OCI-LY7 (cell line): ENCODE measurements at regions of chr17 and their contacts with region 1.

Region 1: GRCh38 chr17:1573916-1574696 is 11.5 kb upstream of the PITPNA start:
- DNase-seq: peak; percentile 84
- H3K4me3 ChIP-seq: no peak overlapping the region
- H3K27ac ChIP-seq: no peak overlapping the region
- H3K4me1 ChIP-seq: peaks cover 13% of the 10 kb centered on the region
- CTCF ChIP-seq: peak; percentile 91

Region 2: DNA sequence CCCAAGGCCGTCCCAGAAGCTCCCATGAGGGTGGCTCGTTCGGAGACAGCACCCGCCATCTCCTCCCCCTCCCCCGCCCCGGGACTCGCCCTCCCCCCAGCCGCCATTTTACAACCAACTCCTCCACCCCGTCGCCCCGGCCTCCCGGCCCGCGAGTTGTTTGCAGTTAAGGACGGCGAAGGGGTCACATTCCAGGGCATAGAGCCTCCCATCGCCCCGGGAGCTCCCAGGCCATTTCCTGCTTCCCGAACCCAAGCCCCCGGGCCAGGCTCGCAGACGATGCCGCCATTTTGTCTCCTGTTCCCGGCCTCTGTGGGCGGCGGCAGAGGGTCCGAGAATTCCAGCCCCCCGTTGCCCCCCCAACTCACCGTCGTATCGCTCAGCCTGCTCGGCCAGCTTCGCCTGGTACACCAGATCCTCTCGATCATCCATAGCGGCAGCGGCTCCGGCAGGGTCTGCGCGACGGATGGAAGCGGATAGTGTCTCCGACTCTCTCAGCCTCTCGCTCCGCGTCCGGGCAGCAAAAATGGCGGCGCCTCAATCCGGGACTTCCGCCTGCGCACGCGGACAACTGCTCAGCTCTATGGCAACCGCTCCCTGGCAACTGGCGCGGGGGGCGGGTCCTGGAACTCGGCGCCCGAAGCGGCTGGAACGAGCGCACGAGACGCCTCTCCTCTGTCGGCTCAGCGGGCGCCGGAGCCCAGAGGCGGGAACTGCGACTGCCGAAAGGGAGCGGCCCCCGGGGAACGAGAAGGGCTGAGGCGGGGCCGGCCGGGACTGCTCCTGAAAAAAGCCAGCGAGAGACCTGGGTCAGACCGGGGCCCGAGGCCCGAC is 174.2 kb before region 1 on chr17 and contains the start of gene YWHAE:
- CTCF ChIA-PET with region 1: no interaction called
- POLR2A ChIA-PET with region 1: no interaction called
- intact Hi-C with region 1: no loop called
- DNase-seq: peak; percentile 95
- H3K4me3 ChIP-seq: peak within 1 kb of the TSS; percentile 97
- H3K27ac ChIP-seq: peak within 1 kb of the TSS; percentile 72
- H3K4me1 ChIP-seq: peaks cover 26% of the 10 kb centered on the region
- CTCF ChIP-seq: no peak
- total RNA-seq, gene YWHAE: 267 and 467 TPM in 2 replicates

Region 3: DNA sequence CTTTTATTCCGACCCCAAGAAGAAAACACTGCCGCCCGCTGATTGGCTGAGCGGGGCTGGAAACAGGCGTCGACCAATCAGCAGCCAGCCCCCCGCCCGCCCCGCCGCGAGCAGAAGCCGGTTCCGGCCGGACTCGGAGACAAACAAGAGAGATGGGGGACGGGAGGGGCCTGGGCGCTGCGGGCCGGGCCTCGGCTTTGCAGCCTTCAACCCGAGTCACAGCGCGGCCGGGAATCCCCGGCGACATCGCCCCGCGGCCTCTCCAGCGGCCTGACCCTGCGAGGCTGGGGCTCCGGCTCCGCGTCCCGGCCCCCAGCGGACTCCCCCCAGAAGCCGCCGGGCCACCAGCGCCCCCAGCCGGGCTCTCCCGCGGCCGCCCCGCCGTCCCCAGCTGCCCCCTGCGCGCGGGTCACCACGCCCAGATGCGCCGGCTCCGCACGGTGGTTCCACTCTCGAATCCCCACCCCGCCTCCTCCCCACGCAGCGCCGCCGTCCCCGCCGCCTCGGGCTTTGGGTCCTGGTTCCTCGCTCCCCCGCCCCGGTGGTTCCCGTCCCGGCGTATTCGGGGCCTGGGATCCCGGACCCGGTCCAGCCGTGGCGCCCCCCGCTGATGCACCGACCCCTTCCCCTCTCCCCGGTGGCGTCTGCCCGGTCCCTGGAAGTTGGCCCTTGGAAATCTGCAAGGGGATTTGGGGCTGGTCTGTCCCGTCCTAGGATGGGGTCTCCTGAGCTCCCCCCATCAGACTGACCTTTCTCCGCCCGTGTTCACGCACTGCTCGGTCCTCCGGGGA is 54.9 kb after region 1 on chr17:
- CTCF ChIA-PET with region 1: interaction called, 11 read pairs
- POLR2A ChIA-PET with region 1: interaction called, 6 read pairs
- intact Hi-C with region 1: loop called (anchors 1 kb)
- DNase-seq: peak; percentile 96
- H3K4me3 ChIP-seq: peak overlapping the region; percentile 80
- H3K27ac ChIP-seq: peak overlapping the region; percentile 79
- H3K4me1 ChIP-seq: peaks cover 58% of the 10 kb centered on the region
- CTCF ChIP-seq: peak; percentile 74

Region 4: DNA sequence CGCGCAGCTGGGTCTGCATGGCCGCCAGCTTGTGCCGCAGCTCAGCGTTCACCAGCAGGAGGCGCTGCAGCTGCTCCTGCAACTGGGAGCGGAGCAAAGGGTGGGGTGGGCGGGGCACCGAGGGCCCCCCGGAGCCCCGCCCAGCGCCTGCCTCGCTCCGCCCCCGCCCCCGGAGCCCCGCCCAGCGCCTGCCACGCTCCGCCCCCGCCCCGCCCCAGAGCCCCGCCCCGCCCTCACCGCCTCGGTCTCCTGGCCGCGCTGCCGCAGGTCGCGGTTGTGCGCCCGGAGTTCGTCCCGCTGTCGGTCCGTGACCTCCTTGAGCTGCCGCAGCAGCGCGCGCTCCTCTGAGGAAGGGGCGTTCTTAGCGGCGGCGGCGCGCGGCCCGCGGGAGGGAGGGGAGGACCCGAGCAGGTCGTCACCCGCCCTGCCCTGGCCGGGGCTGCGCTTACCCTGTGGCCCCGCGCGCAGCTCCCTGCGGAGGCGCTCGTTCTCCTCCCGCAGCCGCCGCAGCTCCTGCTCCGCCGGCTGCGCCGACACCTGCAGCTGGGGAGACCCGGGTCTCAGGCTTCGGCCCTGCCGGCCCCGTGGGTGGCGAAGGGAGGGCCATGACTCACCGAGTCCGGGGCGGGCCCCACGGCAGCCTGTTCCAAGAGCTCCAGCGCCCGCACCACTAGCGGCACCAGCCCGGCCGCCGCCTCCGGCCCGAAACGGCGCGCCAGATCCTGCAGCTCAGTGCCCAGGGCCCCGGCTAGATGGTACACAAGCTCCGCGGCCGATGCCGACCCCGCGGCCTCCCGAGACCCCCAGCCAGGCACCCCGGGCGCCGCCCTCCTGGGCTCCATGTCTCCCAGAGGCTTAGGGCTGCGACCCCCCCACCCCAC is 75.1 kb after region 1 on chr17:
- CTCF ChIA-PET with region 1: interaction called, 3 read pairs
- POLR2A ChIA-PET with region 1: no interaction called
- intact Hi-C with region 1: loop called (anchors 5 kb)
- DNase-seq: peak; percentile 96
- H3K4me3 ChIP-seq: peak overlapping the region; percentile 54
- H3K27ac ChIP-seq: peak overlapping the region; percentile 37
- H3K4me1 ChIP-seq: peaks cover 28% of the 10 kb centered on the region
- CTCF ChIP-seq: no peak